ENCODE measurements at regions of chr20 and their contacts with region 1.

Region 1: GRCh38 chr20:5056801-5057599 is 55.7 kb upstream of the SLC23A2 start:
- DNase-seq: peak; percentile 82
- H3K4me3 Mint-ChIP-seq: no peak overlapping the region
- H3K27ac Mint-ChIP-seq: peak overlapping the region; percentile 51
- H3K4me1 Mint-ChIP-seq: peaks cover 12% of the 10 kb centered on the region
- H3K27me3 Mint-ChIP-seq: no peaks in the 10 kb centered on the region

Region 2: DNA sequence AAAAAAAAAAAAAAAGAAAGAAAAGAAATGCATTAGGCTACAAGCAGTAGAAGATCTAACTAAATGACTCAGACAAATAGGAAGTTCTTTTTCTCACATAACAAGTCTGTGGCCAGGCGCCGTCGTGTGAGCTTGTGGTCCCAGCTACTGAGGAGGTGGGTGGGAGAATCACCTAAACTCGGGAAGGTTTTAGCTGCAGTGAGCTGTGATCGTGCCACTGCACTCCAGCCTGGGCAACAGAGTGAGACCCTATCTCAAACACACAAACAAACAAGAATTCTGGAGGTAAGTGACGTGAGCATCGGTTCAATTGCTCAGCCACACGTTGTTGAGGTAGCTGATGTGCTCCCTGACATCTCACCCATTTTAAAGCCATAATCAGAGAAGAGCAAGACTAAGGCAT is 17.7 kb before region 1 on chr20:
- CTCF ChIA-PET with region 1: interaction called, 10 read pairs
- POLR2A ChIA-PET with region 1: no interaction called
- intact Hi-C with region 1: no loop called
- DNase-seq: peak; percentile 65
- H3K4me3 Mint-ChIP-seq: no peak overlapping the region
- H3K27ac Mint-ChIP-seq: no peak overlapping the region
- H3K4me1 Mint-ChIP-seq: peaks cover 6% of the 10 kb centered on the region
- H3K27me3 Mint-ChIP-seq: no peaks in the 10 kb centered on the region

Region 3: GRCh38 chr20:5067877-5068645 is 11.1 kb after region 1 on chr20:
- CTCF ChIA-PET with region 1: interaction called, 10 read pairs
- POLR2A ChIA-PET with region 1: no interaction called
- intact Hi-C with region 1: no loop called
- DNase-seq: no peak
- H3K4me3 Mint-ChIP-seq: no peak overlapping the region
- H3K27ac Mint-ChIP-seq: no peak overlapping the region
- H3K4me1 Mint-ChIP-seq: no peaks in the 10 kb centered on the region
- H3K27me3 Mint-ChIP-seq: no peaks in the 10 kb centered on the region

Measured in activated CD4-positive, alpha-beta memory T cell treated with anti-CD3 and anti-CD28 coated beads for 36 hours (primary cell).